Activated CD4-positive, alpha-beta memory T cell treated with anti-CD3 and anti-CD28 coated beads for 36 hours (primary cell): ENCODE measurements at regions of chr5 and their contacts with region 1.

Region 1: GRCh38 chr5:140174465-140175366 is at the start of gene CYSTM1:
- DNase-seq: peak; percentile 97
- H3K4me3 Mint-ChIP-seq: peak within 1 kb of the TSS; percentile 92
- H3K27ac Mint-ChIP-seq: peak within 1 kb of the TSS; percentile 64
- H3K4me1 Mint-ChIP-seq: peaks cover 12% of the 10 kb centered on the region
- H3K27me3 Mint-ChIP-seq: peaks cover 3% of the 10 kb centered on the region
- total RNA-seq, gene CYSTM1: 25.2 to 26.5 TPM

Region 2: DNA sequence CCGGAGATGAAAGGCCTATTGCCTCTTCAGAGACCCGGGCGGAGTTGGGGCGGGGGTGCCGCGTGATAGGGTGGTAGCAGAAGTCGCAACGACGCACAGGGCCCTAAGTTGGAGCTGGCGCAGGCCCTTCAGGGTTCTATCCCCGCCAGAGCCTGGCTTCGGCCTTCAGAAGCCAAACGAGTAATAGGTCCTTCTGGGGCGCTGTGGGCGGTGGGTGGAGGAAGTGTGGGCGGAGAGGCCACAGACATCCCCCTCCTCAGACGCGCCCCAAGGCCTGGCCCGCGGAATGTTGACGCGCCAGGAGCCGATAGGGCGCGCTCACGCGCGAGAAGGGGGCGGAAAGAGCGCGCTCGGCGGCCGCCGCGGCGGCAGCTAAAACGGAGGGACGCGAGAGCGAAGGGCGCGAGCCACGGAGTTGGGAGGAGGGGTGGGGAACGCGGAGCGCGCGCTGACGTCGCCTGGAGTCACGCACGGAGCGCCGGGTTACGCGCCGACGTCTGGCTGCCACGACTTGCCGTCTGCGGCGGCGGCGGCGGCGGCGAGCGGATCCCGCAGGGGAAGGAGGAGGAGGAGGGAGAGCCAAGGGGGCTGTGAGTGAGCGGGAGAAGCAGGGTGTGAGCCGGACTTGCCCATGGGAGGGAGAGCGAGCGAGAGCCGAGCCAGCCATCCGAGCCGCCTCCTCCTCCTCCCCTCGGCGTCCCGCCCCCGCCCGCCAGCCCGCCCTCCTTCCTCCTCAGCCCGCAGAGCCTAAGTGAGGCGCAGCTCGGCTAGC is 67.2 kb before region 1 on chr5:
- CTCF ChIA-PET with region 1: no interaction called
- POLR2A ChIA-PET with region 1: no interaction called
- intact Hi-C with region 1: loop called (anchors 1 kb)
- DNase-seq: peak; percentile 95
- H3K4me3 Mint-ChIP-seq: peak overlapping the region; percentile 98
- H3K27ac Mint-ChIP-seq: peak overlapping the region; percentile 94
- H3K4me1 Mint-ChIP-seq: peaks cover 43% of the 10 kb centered on the region
- H3K27me3 Mint-ChIP-seq: no peaks in the 10 kb centered on the region

Region 3: GRCh38 chr5:140157032-140157803 is 17.5 kb before region 1 on chr5:
- CTCF ChIA-PET with region 1: interaction called, 3 read pairs
- POLR2A ChIA-PET with region 1: interaction called, 3 read pairs
- intact Hi-C with region 1: loop called (anchors 1 kb)
- DNase-seq: peak; percentile 92
- H3K4me3 Mint-ChIP-seq: peak overlapping the region; percentile 2
- H3K27ac Mint-ChIP-seq: no peak overlapping the region
- H3K4me1 Mint-ChIP-seq: peaks cover 10% of the 10 kb centered on the region
- H3K27me3 Mint-ChIP-seq: no peaks in the 10 kb centered on the region

Region 4: DNA sequence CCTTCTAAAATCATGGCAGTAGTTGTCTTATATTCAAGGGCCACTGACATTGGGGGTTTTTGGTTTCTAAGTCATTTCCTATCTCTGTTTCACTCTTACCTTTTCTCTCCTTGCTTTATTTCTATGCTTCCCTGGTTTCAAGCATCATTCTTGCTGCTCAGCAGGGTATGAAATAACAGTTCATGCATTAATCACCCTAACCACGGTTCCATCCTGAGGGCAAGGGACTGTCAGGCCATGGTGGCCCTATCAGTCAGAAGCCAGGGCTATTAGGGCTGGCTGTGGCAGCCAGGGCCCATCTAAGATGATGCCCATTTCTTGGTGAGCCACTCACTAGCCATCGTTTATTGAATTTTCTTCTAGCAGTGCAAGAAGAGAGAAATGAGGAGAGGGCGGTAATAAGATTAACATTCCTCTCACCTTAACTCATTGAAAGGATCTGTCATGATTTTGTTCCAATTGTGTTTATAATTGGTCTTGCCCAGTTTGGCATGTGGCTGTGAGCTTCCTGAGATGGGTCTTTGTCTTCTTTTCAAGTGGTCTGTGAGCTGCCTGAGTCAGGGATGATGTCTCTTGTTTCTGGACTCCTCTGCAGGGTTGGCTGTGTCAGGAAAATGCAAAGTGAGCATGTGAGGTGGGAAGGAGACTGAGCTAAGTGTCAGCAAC is 45.4 kb after region 1 on chr5:
- CTCF ChIA-PET with region 1: no interaction called
- POLR2A ChIA-PET with region 1: no interaction called
- intact Hi-C with region 1: loop called (anchors 5 kb)
- DNase-seq: peak; percentile 40
- H3K4me3 Mint-ChIP-seq: no peak overlapping the region
- H3K27ac Mint-ChIP-seq: no peak overlapping the region
- H3K4me1 Mint-ChIP-seq: peaks cover 29% of the 10 kb centered on the region
- H3K27me3 Mint-ChIP-seq: no peaks in the 10 kb centered on the region

Region 5: DNA sequence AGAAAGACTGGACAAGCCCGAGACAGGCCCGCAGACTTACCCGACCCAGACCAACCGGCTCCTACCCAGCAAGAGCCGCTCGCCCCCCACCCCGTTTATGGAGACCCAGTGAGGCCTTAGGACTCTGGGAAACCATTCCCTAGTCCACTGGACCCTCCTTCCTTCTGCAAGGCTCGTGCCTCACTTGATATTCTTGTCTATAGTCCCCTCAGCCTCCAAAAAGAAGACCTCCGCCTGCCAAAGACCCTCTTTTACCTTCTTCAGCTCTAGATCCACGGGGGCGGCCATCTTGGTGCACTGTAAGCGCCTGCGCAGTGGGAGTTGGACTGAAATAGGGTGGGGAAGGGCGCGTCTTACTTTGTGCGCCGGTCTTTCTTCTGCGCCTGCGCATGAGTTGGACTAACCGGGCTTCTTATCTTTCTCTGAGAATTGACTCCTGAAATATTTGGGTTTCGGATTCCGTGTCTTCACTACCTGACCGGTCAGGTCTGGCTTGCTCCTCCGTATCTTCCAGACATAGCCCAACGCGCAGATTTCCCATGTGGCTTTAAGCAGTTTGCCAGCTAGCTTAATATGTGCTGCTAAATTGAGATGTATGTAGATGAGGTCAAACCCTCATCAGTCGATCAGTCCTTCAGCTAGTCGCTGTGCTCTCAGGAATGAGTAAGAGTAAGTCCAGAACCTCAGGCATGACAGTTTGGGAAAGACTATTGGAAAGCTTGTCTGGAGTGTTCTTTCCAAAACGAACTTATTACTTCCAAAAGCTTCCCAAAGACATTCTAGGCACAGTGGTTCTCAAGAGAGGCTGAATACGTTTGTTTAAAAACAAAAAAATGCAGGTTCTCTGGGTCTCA is 128.3 kb after region 1 on chr5 and contains the start of gene PFDN1:
- CTCF ChIA-PET with region 1: no interaction called
- POLR2A ChIA-PET with region 1: no interaction called
- intact Hi-C with region 1: loop called (anchors 1 kb)
- DNase-seq: peak; percentile 95
- H3K4me3 Mint-ChIP-seq: peak within 1 kb of the TSS; percentile 98
- H3K27ac Mint-ChIP-seq: peak within 1 kb of the TSS; percentile 85
- H3K4me1 Mint-ChIP-seq: peaks cover 26% of the 10 kb centered on the region
- H3K27me3 Mint-ChIP-seq: no peaks in the 10 kb centered on the region
- total RNA-seq, gene PFDN1: 50.1 to 54.6 TPM